ENCODE measurements at regions of chr10 and their contacts with region 1.

Region 1: DNA sequence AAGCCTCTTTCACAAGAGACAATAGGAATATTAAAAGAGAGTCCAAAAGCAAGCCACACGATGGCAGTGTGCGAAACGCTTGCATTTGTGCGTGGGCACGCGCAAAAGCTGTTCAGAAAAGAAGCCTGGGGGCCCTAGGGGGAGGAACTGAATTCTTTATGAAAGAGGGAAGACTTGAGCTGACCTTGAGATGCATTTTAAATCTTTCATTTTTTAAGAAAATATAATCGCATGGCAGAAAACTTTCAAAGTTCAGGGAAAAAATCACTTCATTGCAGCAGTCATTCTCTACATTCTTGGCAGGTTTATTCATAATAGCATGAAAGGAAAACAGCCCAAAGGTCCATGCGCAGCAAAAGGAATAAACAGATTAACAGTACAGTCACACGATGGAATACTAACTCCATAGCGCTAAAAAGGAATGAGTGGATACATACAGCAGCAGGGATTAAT is 206.5 kb upstream of the PRKCQ start:
- DNase-seq: no peak
- H3K4me3 ChIP-seq: peak overlapping the region in 1 of 4 donors; percentile 13
- H3K27ac ChIP-seq: no peak overlapping the region
- H3K4me1 ChIP-seq: peaks cover 0 to 12% (median 5%) of the 10 kb centered on the region in 4 donors
- H3K27me3 ChIP-seq: no peaks in the 10 kb centered on the region
- CTCF ChIP-seq: peak in 2 of 4 experiments; percentile 24 to 36
- EP300 ChIP-seq: no peak
- POLR2A ChIP-seq: no peak

Region 2: GRCh38 chr10:6507311-6507710 is 279.3 kb before region 1 on chr10:
- intact Hi-C with region 1: no loop called
- DNase-seq: no peak
- H3K4me3 ChIP-seq: no peak overlapping the region
- H3K27ac ChIP-seq: no peak overlapping the region
- H3K4me1 ChIP-seq: no peaks in the 10 kb centered on the region
- H3K27me3 ChIP-seq: no peaks in the 10 kb centered on the region
- CTCF ChIP-seq: no peak
- EP300 ChIP-seq: no peak
- POLR2A ChIP-seq: no peak

Region 3: DNA sequence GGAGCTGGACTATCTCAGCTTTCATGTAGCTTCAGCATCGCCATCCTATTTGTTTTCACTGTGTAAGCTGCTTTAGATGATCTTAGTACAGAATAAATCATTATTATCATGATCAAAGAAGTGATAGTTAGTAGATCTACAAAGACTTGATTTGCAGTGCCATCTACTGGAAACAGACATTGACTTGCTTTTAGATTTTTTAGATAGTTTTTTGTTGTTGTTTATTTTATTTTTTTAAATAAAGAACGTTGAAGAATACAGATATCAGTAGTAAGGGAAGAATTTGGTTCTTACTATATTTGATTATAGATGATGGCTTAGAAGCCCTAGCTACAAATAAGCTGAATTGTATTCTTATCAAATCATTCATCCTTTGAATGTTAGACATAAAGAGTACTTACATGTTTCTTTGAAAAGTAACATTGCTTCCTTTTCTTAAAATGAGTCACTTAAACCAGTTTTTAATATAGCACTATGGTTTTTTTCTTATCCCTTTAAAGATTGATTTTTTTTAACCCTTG is 630.6 kb after region 1 on chr10:
- intact Hi-C with region 1: loop called (anchors 5 kb)
- DNase-seq: no peak
- H3K4me3 ChIP-seq: no peak overlapping the region
- H3K27ac ChIP-seq: no peak overlapping the region
- H3K4me1 ChIP-seq: peaks cover 0 to 9% (median 9%) of the 10 kb centered on the region in 4 donors
- H3K27me3 ChIP-seq: peaks cover 10 to 19% (median 19%) of the 10 kb centered on the region in 3 donors
- CTCF ChIP-seq: peak in 1 of 4 experiments; percentile 44
- EP300 ChIP-seq: no peak
- POLR2A ChIP-seq: no peak

Measured in sigmoid colon (tissue), 7 donors.